ENCODE measurements at regions of chr6 and their contacts with region 1.

Region 1: GRCh38 chr6:75934643-75935472 is 137.6 kb downstream of the IMPG1 start:
- DNase-seq: peak in 1 of 2 experiments; percentile 71
- H3K4me3 ChIP-seq: peak overlapping the region; percentile 5 to 61 (median 48); a peak in 7 of 8 replicates
- H3K27ac ChIP-seq: no peak overlapping the region
- H3K4me1 ChIP-seq: peaks cover 0 to 2% (median 0%) of the 10 kb centered on the region in 4 experiments; a peak in 2 of 7 replicates
- H3K27me3 ChIP-seq: peaks cover 0 to 9% (median 2%) of the 10 kb centered on the region in 4 experiments; a peak in 3 of 7 replicates
- CTCF ChIP-seq: peak; percentile 29 to 86 (median 83)
- EP300 ChIP-seq: no peak
- POLR2A ChIP-seq: no peak
- RAD21 ChIP-seq: peak; percentile 92 to 96

Region 2: DNA sequence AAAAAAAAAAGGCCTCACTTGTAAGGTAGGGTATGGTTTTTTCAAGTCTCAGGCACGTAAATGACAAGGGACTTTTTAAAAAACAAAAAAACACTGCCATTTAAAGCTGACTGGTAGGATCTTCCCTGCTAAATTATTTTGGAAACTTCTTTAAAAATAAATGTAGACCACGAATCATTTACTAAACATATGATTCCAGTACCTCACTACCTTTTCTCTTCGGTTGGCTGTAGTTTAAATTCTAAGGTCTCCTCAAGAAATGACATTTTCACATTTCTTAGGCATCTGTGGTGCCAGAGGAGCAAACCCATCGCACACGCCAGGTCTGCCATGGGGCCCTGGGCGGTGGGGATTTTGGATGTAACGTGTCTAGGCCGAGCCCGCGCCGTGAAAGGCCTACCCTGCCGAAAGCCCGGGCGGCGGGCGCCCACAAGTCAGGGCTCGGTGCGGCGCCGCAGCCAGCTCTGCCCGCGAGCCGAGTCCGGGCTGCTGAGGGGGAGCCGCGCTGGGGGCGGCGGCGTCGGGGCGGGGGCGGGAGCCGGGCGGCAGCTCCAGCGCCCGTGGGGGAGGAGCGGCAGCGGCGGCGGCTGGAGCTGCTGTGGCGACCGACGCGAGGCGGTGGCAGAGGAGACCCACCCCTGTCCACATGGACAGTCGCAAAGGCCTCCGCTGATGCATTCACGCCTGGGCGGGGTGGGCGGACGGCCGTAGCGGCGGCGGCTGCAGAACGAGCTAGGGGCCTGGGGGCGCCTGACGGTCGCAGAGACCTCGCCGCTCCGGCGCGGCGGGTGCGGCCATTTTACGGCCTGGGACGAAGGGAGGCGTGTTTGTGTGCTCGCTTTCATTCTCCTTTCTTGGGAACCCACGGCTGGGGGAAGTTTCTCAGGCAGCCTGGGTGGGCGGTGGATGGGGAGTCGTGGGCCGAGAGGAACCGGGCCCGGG is 333.3 kb before region 1 on chr6 and contains the start of gene SENP6:
- CTCF ChIA-PET with region 1: no interaction called
- POLR2A ChIA-PET with region 1: no interaction called
- DNase-seq: peak in 1 of 2 experiments; percentile 87
- H3K4me3 ChIP-seq: peak within 1 kb of the TSS; percentile 90 to 99 (median 93)
- H3K27ac ChIP-seq: peak within 1 kb of the TSS; percentile 95
- H3K4me1 ChIP-seq: peaks cover 0 to 8% (median 2%) of the 10 kb centered on the region in 4 experiments; a peak in 3 of 7 replicates
- H3K27me3 ChIP-seq: no peaks in the 10 kb centered on the region
- CTCF ChIP-seq: no peak
- EP300 ChIP-seq: peak in 1 of 2 experiments; percentile 31; a peak in 1 of 3 replicates
- POLR2A ChIP-seq: peak; percentile 73 to 87; a peak in 2 of 3 replicates
- RAD21 ChIP-seq: 0 out of 4 replicates have a peak, but pooled peaks of 1 of the 2 experiments have one; percentile 0
- total RNA-seq, gene SENP6: 94.7 and 103 TPM in 2 replicates

Region 3: DNA sequence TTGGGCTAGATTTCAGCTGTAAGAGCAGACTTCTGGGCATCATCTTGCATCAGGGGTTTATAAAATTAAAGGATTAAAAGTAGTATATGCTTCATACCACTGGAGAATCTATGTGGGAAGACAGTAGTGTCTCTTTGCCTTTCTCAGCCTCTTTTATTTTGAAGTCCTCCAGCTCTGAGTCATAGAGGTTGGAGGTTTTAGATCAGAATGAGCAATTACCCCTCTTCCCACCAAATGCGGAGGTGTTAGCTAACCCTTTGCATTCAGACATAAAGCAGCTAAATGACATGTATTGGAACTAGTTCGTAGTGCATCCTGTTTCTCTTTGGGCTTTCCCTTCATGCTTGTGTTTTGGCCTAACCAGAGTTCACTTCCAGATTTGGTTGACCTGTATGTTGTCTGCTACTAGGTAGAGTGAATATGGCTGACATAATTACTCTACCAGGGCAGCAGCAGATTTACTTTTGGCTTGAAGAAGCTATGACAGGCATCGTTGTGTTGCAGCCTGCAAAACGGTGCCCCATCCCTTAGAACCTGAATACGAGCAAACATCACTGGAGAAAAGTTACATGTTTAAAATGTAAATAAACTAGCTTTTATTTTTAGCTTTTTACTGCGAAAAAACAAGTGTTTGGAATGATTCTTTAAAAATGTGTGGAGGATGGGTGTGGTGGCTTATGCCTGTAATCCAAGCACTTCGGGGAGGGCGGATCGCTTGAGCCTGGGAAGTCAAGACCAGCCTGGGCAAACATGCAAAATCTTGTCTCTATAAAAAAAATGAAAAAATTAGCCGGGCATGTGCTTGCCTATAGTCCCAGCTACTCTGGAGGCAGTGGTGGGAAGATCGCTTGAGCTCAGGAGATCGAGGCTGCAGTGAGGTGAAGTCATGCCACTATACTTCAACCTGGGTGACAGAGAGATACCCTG is 103.6 kb before region 1 on chr6:
- CTCF ChIA-PET with region 1: no interaction called
- POLR2A ChIA-PET with region 1: no interaction called
- DNase-seq: no peak
- H3K4me3 ChIP-seq: no peak overlapping the region
- H3K27ac ChIP-seq: no peak overlapping the region
- H3K4me1 ChIP-seq: no peaks in the 10 kb centered on the region
- H3K27me3 ChIP-seq: no peaks in the 10 kb centered on the region
- CTCF ChIP-seq: no peak
- EP300 ChIP-seq: no peak
- POLR2A ChIP-seq: no peak
- RAD21 ChIP-seq: no peak

Region 4: DNA sequence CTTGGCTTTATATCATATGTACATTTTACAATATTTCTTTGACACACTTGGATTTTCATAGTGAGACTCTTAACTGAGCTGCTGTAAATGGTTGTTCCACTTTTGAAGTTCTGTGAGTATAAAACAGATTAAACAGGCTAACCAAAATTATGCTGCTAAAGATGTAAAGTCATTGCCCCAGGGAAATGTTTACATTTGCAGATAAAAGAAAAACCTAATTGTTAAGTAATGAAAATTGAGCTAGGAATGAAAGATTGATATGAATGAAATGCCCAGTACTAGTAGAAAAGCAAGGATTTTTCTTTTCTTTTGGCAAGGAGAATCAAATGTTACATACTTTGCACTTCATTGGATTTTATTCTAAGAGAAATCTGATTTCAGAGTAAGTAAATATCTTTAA is 21.8 kb before region 1 on chr6:
- CTCF ChIA-PET with region 1: interaction called, 14 read pairs
- POLR2A ChIA-PET with region 1: no interaction called
- DNase-seq: no peak
- H3K4me3 ChIP-seq: no peak overlapping the region
- H3K27ac ChIP-seq: no peak overlapping the region
- H3K4me1 ChIP-seq: peaks cover 0 to 3% (median 0%) of the 10 kb centered on the region in 4 experiments; a peak in 1 of 7 replicates
- H3K27me3 ChIP-seq: no peaks in the 10 kb centered on the region
- CTCF ChIP-seq: no peak
- EP300 ChIP-seq: no peak
- POLR2A ChIP-seq: no peak
- RAD21 ChIP-seq: no peak

Region 5: GRCh38 chr6:75946146-75946831 is 11.4 kb after region 1 on chr6:
- CTCF ChIA-PET with region 1: interaction called, 22 read pairs
- POLR2A ChIA-PET with region 1: no interaction called
- DNase-seq: no peak
- H3K4me3 ChIP-seq: no peak overlapping the region
- H3K27ac ChIP-seq: no peak overlapping the region
- H3K4me1 ChIP-seq: peaks cover 0 to 7% (median 0%) of the 10 kb centered on the region in 4 experiments; a peak in 1 of 7 replicates
- H3K27me3 ChIP-seq: no peaks in the 10 kb centered on the region; a peak in 1 of 7 replicates
- CTCF ChIP-seq: no peak
- EP300 ChIP-seq: no peak
- POLR2A ChIP-seq: no peak
- RAD21 ChIP-seq: no peak

Region 6: GRCh38 chr6:75970093-75970492 is 35.2 kb after region 1 on chr6:
- CTCF ChIA-PET with region 1: no interaction called
- POLR2A ChIA-PET with region 1: no interaction called
- DNase-seq: no peak
- H3K4me3 ChIP-seq: no peak overlapping the region
- H3K27ac ChIP-seq: no peak overlapping the region
- H3K4me1 ChIP-seq: no peaks in the 10 kb centered on the region
- H3K27me3 ChIP-seq: no peaks in the 10 kb centered on the region
- CTCF ChIP-seq: no peak
- EP300 ChIP-seq: no peak
- POLR2A ChIP-seq: no peak
- RAD21 ChIP-seq: no peak

Region 7: GRCh38 chr6:76073281-76073680 is 138.4 kb after region 1 on chr6:
- CTCF ChIA-PET with region 1: no interaction called
- POLR2A ChIA-PET with region 1: no interaction called
- DNase-seq: no peak
- H3K4me3 ChIP-seq: no peak overlapping the region
- H3K27ac ChIP-seq: no peak overlapping the region
- H3K4me1 ChIP-seq: no peaks in the 10 kb centered on the region
- H3K27me3 ChIP-seq: no peaks in the 10 kb centered on the region
- CTCF ChIP-seq: no peak
- EP300 ChIP-seq: no peak
- POLR2A ChIP-seq: no peak
- RAD21 ChIP-seq: no peak

Region 8: DNA sequence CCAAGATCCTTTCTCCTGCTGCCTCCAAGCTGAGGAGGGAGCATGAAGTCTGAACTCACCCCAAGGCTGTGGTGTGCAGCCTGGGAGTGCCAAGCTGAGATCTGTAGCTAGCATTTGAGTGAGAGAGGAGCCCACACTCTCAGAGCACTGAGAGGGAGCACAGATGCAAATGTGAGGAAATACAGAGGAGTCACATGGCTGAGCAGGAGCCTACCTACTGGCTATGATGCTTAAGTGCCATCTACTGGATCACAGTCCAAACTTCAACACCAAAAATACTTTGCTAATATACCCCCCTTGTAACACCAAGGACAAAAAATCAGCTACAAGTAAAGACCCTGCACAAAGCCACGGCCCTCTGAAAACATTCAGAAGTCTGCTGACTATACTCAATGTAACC is 232.0 kb after region 1 on chr6:
- CTCF ChIA-PET with region 1: interaction called, 22 read pairs
- POLR2A ChIA-PET with region 1: interaction called, 3 read pairs
- DNase-seq: no peak
- H3K4me3 ChIP-seq: no peak overlapping the region
- H3K27ac ChIP-seq: no peak overlapping the region
- H3K4me1 ChIP-seq: no peaks in the 10 kb centered on the region
- H3K27me3 ChIP-seq: no peaks in the 10 kb centered on the region
- CTCF ChIP-seq: peak in 2 of 3 experiments; percentile 4 to 9; a peak in 1 of 4 replicates
- EP300 ChIP-seq: no peak
- POLR2A ChIP-seq: no peak
- RAD21 ChIP-seq: peak; percentile 49 to 59

Region 9: DNA sequence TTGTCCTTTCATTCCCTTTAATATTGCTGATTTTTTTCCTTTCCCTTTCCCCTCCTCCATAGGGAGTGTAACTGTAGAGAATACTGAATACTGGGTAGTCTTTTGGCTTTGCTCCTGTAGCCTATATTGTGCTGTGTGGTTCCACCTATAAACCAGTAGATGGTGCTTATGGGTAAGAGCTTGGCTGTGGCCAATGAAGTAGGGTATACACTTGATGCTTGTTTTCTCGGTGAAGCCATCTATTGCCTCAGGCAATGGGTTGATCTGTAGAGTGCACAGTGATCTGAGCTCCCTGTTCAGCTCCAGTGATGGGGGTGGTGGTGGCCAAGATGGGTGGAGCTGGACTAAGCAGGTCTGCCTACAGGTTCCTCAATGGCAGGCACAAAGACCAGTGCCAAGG is 340.9 kb after region 1 on chr6:
- CTCF ChIA-PET with region 1: interaction called, 17 read pairs
- POLR2A ChIA-PET with region 1: no interaction called
- DNase-seq: no peak
- H3K4me3 ChIP-seq: no peak overlapping the region
- H3K27ac ChIP-seq: no peak overlapping the region
- H3K4me1 ChIP-seq: no peaks in the 10 kb centered on the region
- H3K27me3 ChIP-seq: no peaks in the 10 kb centered on the region
- CTCF ChIP-seq: peak in 2 of 3 experiments; percentile 46 to 60; a peak in 3 of 4 replicates
- EP300 ChIP-seq: no peak
- POLR2A ChIP-seq: no peak
- RAD21 ChIP-seq: peak; percentile 70 to 83

Region 10: GRCh38 chr6:76351275-76351674 is 416.4 kb after region 1 on chr6:
- CTCF ChIA-PET with region 1: interaction called, 47 read pairs
- POLR2A ChIA-PET with region 1: no interaction called
- DNase-seq: no peak
- H3K4me3 ChIP-seq: no peak overlapping the region
- H3K27ac ChIP-seq: no peak overlapping the region
- H3K4me1 ChIP-seq: no peaks in the 10 kb centered on the region
- H3K27me3 ChIP-seq: peaks cover 0 to 1% (median 0%) of the 10 kb centered on the region in 4 experiments; a peak in 1 of 7 replicates
- CTCF ChIP-seq: peak in 2 of 3 experiments; percentile 66 to 67; a peak in 3 of 4 replicates
- EP300 ChIP-seq: no peak
- POLR2A ChIP-seq: no peak
- RAD21 ChIP-seq: peak; percentile 77 to 86

Region 11: GRCh38 chr6:76861403-76861802 is 926.5 kb after region 1 on chr6:
- CTCF ChIA-PET with region 1: interaction called, 18 read pairs
- POLR2A ChIA-PET with region 1: no interaction called
- DNase-seq: peak in 1 of 2 experiments; percentile 58
- H3K4me3 ChIP-seq: no peak overlapping the region
- H3K27ac ChIP-seq: no peak overlapping the region
- H3K4me1 ChIP-seq: 0 out of 7 replicates have a peak, but pooled peaks cover 0 to 2% (median 0%) of the 10 kb centered on the region in 4 experiments
- H3K27me3 ChIP-seq: no peaks in the 10 kb centered on the region
- CTCF ChIP-seq: peak in 2 of 3 experiments; percentile 50 to 64; a peak in 3 of 4 replicates
- EP300 ChIP-seq: no peak
- POLR2A ChIP-seq: no peak
- RAD21 ChIP-seq: peak; percentile 56 to 66

Measured in H1 (cell line).